CD4-positive, alpha-beta memory T cell (primary cell): ENCODE measurements at regions of chr2 and their contacts with region 1.

Region 1: GRCh38 chr2:110812726-110813645 is 80.6 kb downstream of the ACOXL start:
- DNase-seq: no peak
- H3K4me3 ChIP-seq: no peak overlapping the region
- H3K4me3 Mint-ChIP-seq: no peak overlapping the region
- H3K27ac ChIP-seq: no peak overlapping the region
- H3K27ac Mint-ChIP-seq: no peak overlapping the region
- H3K4me1 ChIP-seq: peaks cover 4% of the 10 kb centered on the region
- H3K4me1 Mint-ChIP-seq: peaks cover 3 to 11% (median 4%) of the 10 kb centered on the region in 4 donors
- H3K27me3 ChIP-seq: no peaks in the 10 kb centered on the region
- H3K27me3 Mint-ChIP-seq: peaks cover 2 to 4% of the 10 kb centered on the region in 2 donors

Region 2: DNA sequence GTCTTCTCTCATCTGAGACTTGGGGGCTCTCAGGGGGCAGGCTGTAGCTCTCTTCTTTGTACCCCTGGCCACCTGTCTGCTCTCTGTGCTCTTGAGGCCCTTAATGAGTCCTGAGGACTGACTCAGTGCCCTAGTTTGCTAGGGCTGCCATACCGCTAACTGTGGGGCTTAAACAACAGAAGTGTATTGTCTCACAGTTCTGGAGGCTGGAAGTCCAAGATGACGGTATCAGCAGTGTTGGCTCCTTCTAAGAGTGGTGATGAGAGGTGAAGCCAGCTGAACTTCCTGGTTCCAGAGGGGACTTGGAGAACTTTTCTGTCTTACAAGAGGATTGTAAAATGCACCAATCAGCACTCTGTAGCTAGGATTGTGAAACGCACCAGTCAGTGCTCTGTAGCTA is 13.6 kb before region 1 on chr2:
- CTCF ChIA-PET with region 1: no interaction called
- POLR2A ChIA-PET with region 1: no interaction called
- intact Hi-C with region 1: no loop called
- DNase-seq: no peak
- H3K4me3 ChIP-seq: no peak overlapping the region
- H3K4me3 Mint-ChIP-seq: no peak overlapping the region
- H3K27ac ChIP-seq: no peak overlapping the region
- H3K27ac Mint-ChIP-seq: no peak overlapping the region
- H3K4me1 ChIP-seq: no peaks in the 10 kb centered on the region
- H3K4me1 Mint-ChIP-seq: peaks cover 1 to 3% (median 1%) of the 10 kb centered on the region in 4 donors
- H3K27me3 ChIP-seq: no peaks in the 10 kb centered on the region
- H3K27me3 Mint-ChIP-seq: peaks cover 18 to 23% of the 10 kb centered on the region in 2 donors

Region 3: DNA sequence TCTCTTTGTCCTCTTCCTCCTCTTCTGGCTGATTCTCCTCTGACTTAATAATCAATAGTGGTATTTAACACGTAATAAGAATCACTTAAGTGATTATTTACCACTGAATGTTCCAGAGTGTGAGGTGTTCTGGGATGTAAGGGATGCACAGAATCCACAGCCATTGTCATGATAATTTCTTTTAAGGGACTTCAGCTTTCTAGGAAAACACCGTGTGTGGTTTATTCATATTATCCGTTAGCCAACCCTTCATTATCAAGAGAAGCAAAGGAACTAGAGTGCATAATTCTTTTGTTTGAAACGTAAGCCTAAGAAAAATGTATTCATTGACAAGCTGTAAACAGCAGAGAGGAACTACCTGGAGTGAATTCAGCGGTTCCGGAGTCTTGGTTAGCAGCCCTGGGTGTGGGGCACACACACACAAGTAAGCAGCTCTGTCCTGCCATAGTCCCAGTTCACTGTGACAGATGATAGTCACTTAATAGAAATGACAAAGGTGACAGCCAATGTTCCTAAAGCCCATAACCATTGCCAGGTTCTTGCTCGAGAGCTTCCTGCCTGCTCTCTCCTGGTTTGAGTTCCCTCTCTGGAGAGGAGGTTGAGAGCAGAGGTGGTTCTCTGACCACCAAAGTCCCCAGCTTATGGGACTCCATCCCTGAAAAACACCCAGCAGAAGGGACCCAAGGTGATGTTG is 21.3 kb after region 1 on chr2:
- CTCF ChIA-PET with region 1: interaction called, 14 read pairs
- POLR2A ChIA-PET with region 1: no interaction called
- intact Hi-C with region 1: no loop called
- DNase-seq: no peak
- H3K4me3 ChIP-seq: no peak overlapping the region
- H3K4me3 Mint-ChIP-seq: no peak overlapping the region
- H3K27ac ChIP-seq: no peak overlapping the region
- H3K27ac Mint-ChIP-seq: peak overlapping the region in 1 of 7 donors; percentile 34
- H3K4me1 ChIP-seq: no peaks in the 10 kb centered on the region
- H3K4me1 Mint-ChIP-seq: no peaks in the 10 kb centered on the region
- H3K27me3 ChIP-seq: no peaks in the 10 kb centered on the region
- H3K27me3 Mint-ChIP-seq: peaks cover 2% of the 10 kb centered on the region in 2 donors

Region 4: DNA sequence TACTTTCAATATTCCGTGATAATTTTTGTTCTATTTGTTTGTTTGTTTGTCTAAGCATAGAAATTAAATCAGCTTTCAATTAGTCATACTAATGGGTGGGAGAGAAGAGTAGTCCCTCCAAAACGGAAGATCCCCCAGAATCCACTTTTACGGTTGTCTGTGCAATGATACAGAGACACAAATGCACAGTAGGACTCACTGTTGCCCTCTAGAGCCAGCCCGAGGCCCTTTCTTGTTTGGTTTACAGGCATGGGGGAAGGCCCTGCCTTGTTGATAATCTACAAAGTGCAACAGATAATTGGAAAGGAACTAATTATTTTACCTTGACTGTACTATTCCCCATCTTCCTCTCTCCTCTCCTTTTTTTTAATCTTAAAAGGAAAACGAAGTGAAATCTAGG is 40.5 kb after region 1 on chr2:
- CTCF ChIA-PET with region 1: interaction called, 49 read pairs
- POLR2A ChIA-PET with region 1: no interaction called
- intact Hi-C with region 1: loop called (anchors 1 kb)
- DNase-seq: peak; percentile 39 to 61 (median 44)
- H3K4me3 ChIP-seq: no peak overlapping the region
- H3K4me3 Mint-ChIP-seq: peak overlapping the region in 6 of 8 donors; percentile 4 to 81 (median 68)
- H3K27ac ChIP-seq: no peak overlapping the region
- H3K27ac Mint-ChIP-seq: peak overlapping the region; percentile 53 to 96 (median 78)
- H3K4me1 ChIP-seq: peaks cover 39% of the 10 kb centered on the region
- H3K4me1 Mint-ChIP-seq: peaks cover 33 to 53% (median 42%) of the 10 kb centered on the region in 4 donors
- H3K27me3 ChIP-seq: no peaks in the 10 kb centered on the region
- H3K27me3 Mint-ChIP-seq: no peaks in the 10 kb centered on the region

Region 5: GRCh38 chr2:111120253-111121027 is 307.5 kb after region 1 on chr2 and contains the start of gene BCL2L11:
- CTCF ChIA-PET with region 1: interaction called, 10 read pairs
- POLR2A ChIA-PET with region 1: no interaction called
- intact Hi-C with region 1: loop called (anchors 2 kb)
- DNase-seq: peak; percentile 85 to 91 (median 87)
- H3K4me3 ChIP-seq: peak within 1 kb of the TSS; percentile 78 to 83
- H3K4me3 Mint-ChIP-seq: peak within 1 kb of the TSS; percentile 88 to 97 (median 94)
- H3K27ac ChIP-seq: peak within 1 kb of the TSS; percentile 32
- H3K27ac Mint-ChIP-seq: peak within 1 kb of the TSS; percentile 82 to 95 (median 89)
- H3K4me1 ChIP-seq: peaks cover 47% of the 10 kb centered on the region
- H3K4me1 Mint-ChIP-seq: peaks cover 21 to 59% (median 37%) of the 10 kb centered on the region in 4 donors
- H3K27me3 ChIP-seq: peaks cover 36% of the 10 kb centered on the region
- H3K27me3 Mint-ChIP-seq: peaks cover 19 to 35% of the 10 kb centered on the region in 2 donors
- total RNA-seq, gene BCL2L11: 33.4 to 34.1 TPM